ENCODE measurements at regions of chr1 and their contacts with region 1.

Region 1: DNA sequence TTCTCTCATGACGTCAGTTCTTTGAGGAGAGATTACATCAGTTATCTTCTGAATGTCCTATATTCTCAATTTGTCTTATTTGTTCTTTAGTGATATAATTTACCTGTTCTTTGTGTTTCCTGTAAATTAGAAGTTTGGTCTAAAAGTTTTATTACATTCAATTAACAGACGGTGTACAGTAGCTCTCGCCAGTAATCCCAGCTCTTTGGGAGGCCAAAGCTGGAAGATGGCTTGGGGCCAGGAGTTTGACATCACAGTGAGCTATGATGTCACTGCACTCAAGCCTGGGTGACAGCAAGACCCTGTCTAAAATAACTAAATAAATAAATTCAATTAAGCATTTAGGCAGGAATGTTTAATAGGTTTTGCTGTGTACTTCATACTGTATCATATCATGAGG is 25.3 kb upstream of the IPP start:
- DNase-seq: no peak
- H3K4me3 ChIP-seq: no peak overlapping the region
- H3K27ac ChIP-seq: no peak overlapping the region
- H3K4me1 ChIP-seq: no peaks in the 10 kb centered on the region
- H3K27me3 ChIP-seq: no peaks in the 10 kb centered on the region
- CTCF ChIP-seq: no peak

Region 2: GRCh38 chr1:44505210-44505993 is 1270.4 kb before region 1 on chr1:
- CTCF ChIA-PET with region 1: no interaction called
- POLR2A ChIA-PET with region 1: interaction called, 26 read pairs
- intact Hi-C with region 1: no loop called
- DNase-seq: no peak
- H3K4me3 ChIP-seq: no peak overlapping the region
- H3K27ac ChIP-seq: no peak overlapping the region
- H3K4me1 ChIP-seq: no peaks in the 10 kb centered on the region
- H3K27me3 ChIP-seq: no peaks in the 10 kb centered on the region
- CTCF ChIP-seq: no peak

Region 3: DNA sequence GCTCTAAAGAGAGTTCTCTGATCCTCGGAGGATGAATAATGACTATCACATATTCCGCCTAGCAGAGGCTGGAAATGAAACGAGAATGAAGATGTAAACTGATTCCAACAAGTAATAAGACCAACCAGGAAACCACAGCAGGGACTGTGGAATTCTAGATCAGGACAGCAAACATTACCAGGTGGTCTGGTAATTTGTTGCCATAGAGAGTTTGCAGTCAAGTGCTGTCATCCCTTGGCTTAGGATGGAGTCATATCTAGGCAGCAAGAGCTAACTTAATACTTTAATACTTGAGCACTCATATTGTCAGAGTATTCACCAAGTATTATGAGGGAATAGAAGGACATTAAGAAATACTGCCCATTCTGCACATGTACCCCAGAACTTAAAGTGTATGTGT is 390.5 kb before region 1 on chr1:
- CTCF ChIA-PET with region 1: no interaction called
- POLR2A ChIA-PET with region 1: no interaction called
- intact Hi-C with region 1: no loop called
- DNase-seq: no peak
- H3K4me3 ChIP-seq: no peak overlapping the region
- H3K27ac ChIP-seq: no peak overlapping the region
- H3K4me1 ChIP-seq: no peaks in the 10 kb centered on the region
- H3K27me3 ChIP-seq: no peaks in the 10 kb centered on the region
- CTCF ChIP-seq: no peak